ENCODE measurements at regions of chr12 and their contacts with region 1.

Region 1: DNA sequence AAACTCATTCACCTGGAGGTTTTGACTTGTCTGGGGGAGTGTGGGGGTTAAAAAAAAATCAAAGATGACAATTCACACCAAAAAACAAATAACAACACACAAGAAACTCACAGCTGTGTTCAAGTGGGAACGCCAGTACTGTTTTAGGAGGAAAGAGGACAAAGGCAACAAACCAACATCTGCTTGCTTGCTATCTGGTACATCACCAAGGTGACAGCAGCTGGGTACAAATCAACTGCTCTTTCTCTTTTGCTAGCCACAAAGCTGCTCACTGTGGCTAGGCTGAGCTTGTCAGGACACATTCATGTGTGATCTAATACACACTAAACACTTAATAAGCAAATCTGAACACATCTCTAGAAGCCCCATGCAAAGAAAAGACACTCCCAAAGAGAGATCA is 128.0 kb upstream of the RAP1B start:
- DNase-seq: peak; percentile 89
- ATAC-seq: peak; percentile 90
- H3K4me3 ChIP-seq: no peak overlapping the region
- H3K27ac ChIP-seq: peak overlapping the region; percentile 91
- H3K4me1 ChIP-seq: peaks cover 32% of the 10 kb centered on the region
- H3K27me3 ChIP-seq: no peaks in the 10 kb centered on the region
- CTCF ChIP-seq: no peak
- EP300 ChIP-seq: peak; percentile 74 to 93
- POLR2A ChIP-seq: no peak
- RAD21 ChIP-seq: no peak

Region 2: GRCh38 chr12:67928621-67929388 is 553.9 kb before region 1 on chr12:
- CTCF ChIA-PET with region 1: no interaction called
- POLR2A ChIA-PET with region 1: no interaction called
- RAD21 ChIA-PET with region 1: no interaction called
- SMC1A ChIA-PET with region 1: no interaction called
- in situ Hi-C with region 1: no loop called
- intact Hi-C with region 1: no loop called
- DNase-seq: no peak
- ATAC-seq: no peak
- H3K4me3 ChIP-seq: no peak overlapping the region
- H3K27ac ChIP-seq: no peak overlapping the region
- H3K4me1 ChIP-seq: no peaks in the 10 kb centered on the region
- H3K27me3 ChIP-seq: no peaks in the 10 kb centered on the region; a peak in 2 of 4 replicates
- CTCF ChIP-seq: no peak
- EP300 ChIP-seq: no peak
- POLR2A ChIP-seq: no peak
- RAD21 ChIP-seq: no peak

Region 3: GRCh38 chr12:68364893-68365725 is 117.6 kb before region 1 on chr12:
- CTCF ChIA-PET with region 1: interaction called, 3 read pairs
- POLR2A ChIA-PET with region 1: interaction called, 15 read pairs
- RAD21 ChIA-PET with region 1: interaction called, 28 read pairs
- SMC1A ChIA-PET with region 1: interaction called, 23 read pairs
- in situ Hi-C with region 1: no loop called
- intact Hi-C with region 1: loop called (anchors 2 kb)
- DNase-seq: peak; percentile 97
- ATAC-seq: peak; percentile 89
- H3K4me3 ChIP-seq: peak overlapping the region; percentile 53
- H3K27ac ChIP-seq: peak overlapping the region; percentile 94
- H3K4me1 ChIP-seq: peaks cover 23% of the 10 kb centered on the region
- H3K27me3 ChIP-seq: no peaks in the 10 kb centered on the region
- CTCF ChIP-seq: no peak
- EP300 ChIP-seq: peak; percentile 52 to 59; a peak in 3 of 4 replicates
- POLR2A ChIP-seq: peak; percentile 79
- RAD21 ChIP-seq: peak; percentile 10; the same call in 1 of the 2 replicates

Region 4: DNA sequence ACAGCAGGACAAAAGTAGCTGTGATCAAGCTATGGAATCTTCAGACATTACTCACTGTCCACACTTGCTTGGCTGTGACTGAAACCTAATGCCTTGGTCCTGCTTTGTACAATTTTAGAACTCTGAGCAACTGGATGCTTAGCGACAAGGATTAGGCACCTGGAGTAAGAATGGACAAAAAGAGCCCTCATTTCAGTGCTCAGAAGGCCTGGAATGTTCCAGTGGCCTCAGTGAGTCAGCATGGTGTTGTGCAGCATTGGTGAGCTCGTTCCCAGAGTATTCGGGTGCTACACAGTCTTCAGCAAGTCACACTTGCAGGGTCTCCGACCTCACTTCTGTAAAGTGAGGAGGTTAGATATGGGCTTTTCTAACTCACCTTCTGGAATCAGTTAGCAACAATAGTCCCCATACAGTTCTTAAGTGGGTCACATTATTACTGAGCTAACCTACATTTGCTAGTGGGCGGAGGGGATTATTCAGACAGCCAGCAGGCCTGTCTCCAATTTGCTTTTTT is 42.5 kb before region 1 on chr12:
- CTCF ChIA-PET with region 1: interaction called, 4 read pairs
- POLR2A ChIA-PET with region 1: interaction called, 10 read pairs
- RAD21 ChIA-PET with region 1: interaction called, 76 read pairs
- SMC1A ChIA-PET with region 1: interaction called, 54 read pairs
- in situ Hi-C with region 1: no loop called
- intact Hi-C with region 1: no loop called
- DNase-seq: no peak
- ATAC-seq: peak; percentile 38
- H3K4me3 ChIP-seq: no peak overlapping the region
- H3K27ac ChIP-seq: no peak overlapping the region
- H3K4me1 ChIP-seq: peaks cover 7% of the 10 kb centered on the region
- H3K27me3 ChIP-seq: no peaks in the 10 kb centered on the region
- CTCF ChIP-seq: no peak
- EP300 ChIP-seq: no peak
- POLR2A ChIP-seq: no peak
- RAD21 ChIP-seq: no peak

Region 5: GRCh38 chr12:68462803-68463202 is 19.9 kb before region 1 on chr12:
- CTCF ChIA-PET with region 1: interaction called, 6 read pairs
- POLR2A ChIA-PET with region 1: interaction called, 4 read pairs
- RAD21 ChIA-PET with region 1: interaction called, 10 read pairs
- SMC1A ChIA-PET with region 1: interaction called, 28 read pairs
- in situ Hi-C with region 1: no loop called
- intact Hi-C with region 1: no loop called
- DNase-seq: no peak
- ATAC-seq: peak; percentile 88
- H3K4me3 ChIP-seq: peak overlapping the region; percentile 9; the same call in 1 of the 2 replicates
- H3K27ac ChIP-seq: peak overlapping the region; percentile 13; the same call in 1 of the 2 replicates
- H3K4me1 ChIP-seq: no peaks in the 10 kb centered on the region
- H3K27me3 ChIP-seq: no peaks in the 10 kb centered on the region
- CTCF ChIP-seq: no peak
- EP300 ChIP-seq: no peak
- POLR2A ChIP-seq: no peak
- RAD21 ChIP-seq: no peak

Region 6: GRCh38 chr12:68497702-68498101 is 15.0 kb after region 1 on chr12:
- CTCF ChIA-PET with region 1: interaction called, 11 read pairs
- POLR2A ChIA-PET with region 1: interaction called, 9 read pairs
- RAD21 ChIA-PET with region 1: interaction called, 39 read pairs
- SMC1A ChIA-PET with region 1: interaction called, 84 read pairs
- in situ Hi-C with region 1: no loop called
- intact Hi-C with region 1: no loop called
- DNase-seq: peak; percentile 50
- ATAC-seq: peak; percentile 82
- H3K4me3 ChIP-seq: no peak overlapping the region
- H3K27ac ChIP-seq: no peak overlapping the region
- H3K4me1 ChIP-seq: peaks cover 27% of the 10 kb centered on the region
- H3K27me3 ChIP-seq: no peaks in the 10 kb centered on the region
- CTCF ChIP-seq: no peak
- EP300 ChIP-seq: no peak
- POLR2A ChIP-seq: no peak
- RAD21 ChIP-seq: no peak

Region 7: GRCh38 chr12:68587448-68587873 is 104.8 kb after region 1 on chr12:
- CTCF ChIA-PET with region 1: no interaction called
- POLR2A ChIA-PET with region 1: no interaction called
- RAD21 ChIA-PET with region 1: interaction called, 16 read pairs
- SMC1A ChIA-PET with region 1: interaction called, 9 read pairs
- in situ Hi-C with region 1: no loop called
- intact Hi-C with region 1: no loop called
- DNase-seq: peak; percentile 65
- ATAC-seq: peak; percentile 94
- H3K4me3 ChIP-seq: no peak overlapping the region
- H3K27ac ChIP-seq: no peak overlapping the region
- H3K4me1 ChIP-seq: peaks cover 8% of the 10 kb centered on the region; the same call in 1 of the 2 replicates
- H3K27me3 ChIP-seq: no peaks in the 10 kb centered on the region
- CTCF ChIP-seq: no peak
- EP300 ChIP-seq: peak in 1 of 2 experiments; percentile 53; a peak in 1 of 4 replicates
- POLR2A ChIP-seq: no peak
- RAD21 ChIP-seq: no peak

Region 8: DNA sequence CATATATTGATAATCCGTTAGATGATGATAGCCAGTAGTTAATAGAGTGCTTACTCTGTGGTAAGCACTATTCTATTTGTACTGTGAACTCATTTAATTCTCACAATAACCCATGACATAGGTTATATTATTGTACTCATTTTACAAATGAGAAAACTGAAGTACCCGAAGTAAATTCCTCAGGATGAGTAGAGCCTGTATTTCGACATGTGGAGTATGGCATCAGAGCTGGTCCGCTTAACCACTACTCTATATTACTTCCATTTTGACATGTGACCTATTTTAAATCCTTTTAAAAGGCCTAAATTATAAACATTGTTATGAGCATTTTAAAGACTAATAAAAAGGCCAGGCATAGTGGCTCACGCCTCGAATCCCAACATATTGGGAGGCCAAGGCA is 120.1 kb after region 1 on chr12:
- CTCF ChIA-PET with region 1: no interaction called
- POLR2A ChIA-PET with region 1: no interaction called
- RAD21 ChIA-PET with region 1: no interaction called
- SMC1A ChIA-PET with region 1: no interaction called
- in situ Hi-C with region 1: no loop called
- intact Hi-C with region 1: no loop called
- DNase-seq: no peak
- ATAC-seq: no peak
- H3K4me3 ChIP-seq: no peak overlapping the region
- H3K27ac ChIP-seq: no peak overlapping the region
- H3K4me1 ChIP-seq: no peaks in the 10 kb centered on the region
- H3K27me3 ChIP-seq: no peaks in the 10 kb centered on the region
- CTCF ChIP-seq: no peak
- EP300 ChIP-seq: no peak
- POLR2A ChIP-seq: no peak
- RAD21 ChIP-seq: no peak

Region 9: DNA sequence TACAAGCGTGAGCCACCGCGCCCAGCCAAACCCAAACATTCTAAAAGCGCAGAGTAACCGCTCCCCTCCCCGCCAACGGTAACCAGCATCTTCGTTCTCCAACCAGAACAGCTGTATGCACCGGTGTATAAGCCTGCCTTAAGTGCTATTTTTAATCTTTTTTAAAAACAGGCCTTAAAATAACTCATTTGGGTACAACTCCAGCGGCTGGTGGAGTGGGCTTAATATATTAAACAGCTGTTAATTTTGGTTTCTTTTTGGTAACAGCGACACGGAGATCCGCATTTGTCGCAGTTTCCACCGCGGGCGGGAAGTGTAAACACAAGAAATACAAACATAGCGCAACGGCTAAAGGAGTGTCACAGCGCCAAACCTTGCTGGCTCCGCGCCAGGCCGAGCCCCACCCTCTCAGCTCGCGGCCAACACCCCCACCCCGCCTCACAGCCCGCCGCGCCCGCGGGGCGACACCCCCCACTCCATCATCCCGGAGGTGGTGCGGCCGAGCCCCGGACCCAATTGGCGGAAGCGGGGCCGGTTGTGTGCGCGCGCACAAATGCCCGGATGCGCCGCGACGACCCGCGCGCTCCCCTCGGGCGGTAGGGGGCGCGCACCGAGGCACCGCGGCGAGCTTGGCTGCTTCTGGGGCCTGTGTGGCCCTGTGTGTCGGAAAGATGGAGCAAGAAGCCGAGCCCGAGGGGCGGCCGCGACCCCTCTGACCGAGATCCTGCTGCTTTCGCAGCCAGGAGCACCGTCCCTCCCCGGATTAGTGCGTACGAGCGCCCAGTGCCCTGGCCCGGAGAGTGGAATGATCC is 325.1 kb after region 1 on chr12 and contains the start of gene MDM2:
- CTCF ChIA-PET with region 1: interaction called, 3 read pairs
- POLR2A ChIA-PET with region 1: interaction called, 3 read pairs
- RAD21 ChIA-PET with region 1: no interaction called
- SMC1A ChIA-PET with region 1: interaction called, 3 read pairs
- in situ Hi-C with region 1: no loop called
- intact Hi-C with region 1: loop called (anchors 5 kb)
- DNase-seq: peak; percentile 94
- ATAC-seq: peak; percentile 84
- H3K4me3 ChIP-seq: peak within 1 kb of the TSS; percentile 83
- H3K27ac ChIP-seq: peak within 1 kb of the TSS; percentile 100
- H3K4me1 ChIP-seq: no peaks in the 10 kb centered on the region; the same call in 1 of the 2 replicates
- H3K27me3 ChIP-seq: no peaks in the 10 kb centered on the region
- CTCF ChIP-seq: peak; percentile 63 to 76 (median 72)
- EP300 ChIP-seq: peak; percentile 27 to 65; a peak in 2 of 4 replicates
- POLR2A ChIP-seq: peak; percentile 88
- RAD21 ChIP-seq: peak; percentile 30
- polyA plus RNA-seq, gene MDM2: 48.2 to 65.8 TPM